H1 (cell line): ENCODE measurements at regions of chr19 and their contacts with region 1.

Region 1: GRCh38 chr19:45643024-45643926 is 4.1 kb upstream of the EML2 start:
- DNase-seq: peak in 1 of 2 experiments; percentile 99
- H3K4me3 ChIP-seq: peak overlapping the region; percentile 34 to 89 (median 70)
- H3K27ac ChIP-seq: no peak overlapping the region
- H3K4me1 ChIP-seq: peaks cover 6 to 30% (median 17%) of the 10 kb centered on the region in 4 experiments
- H3K27me3 ChIP-seq: peaks cover 0 to 6% (median 2%) of the 10 kb centered on the region in 4 experiments; a peak in 4 of 7 replicates
- CTCF ChIP-seq: peak; percentile 97 to 99 (median 98)
- EP300 ChIP-seq: no peak
- POLR2A ChIP-seq: peak in 1 of 2 experiments; percentile 31; a peak in 1 of 3 replicates
- RAD21 ChIP-seq: peak; percentile 96 to 98

Region 2: DNA sequence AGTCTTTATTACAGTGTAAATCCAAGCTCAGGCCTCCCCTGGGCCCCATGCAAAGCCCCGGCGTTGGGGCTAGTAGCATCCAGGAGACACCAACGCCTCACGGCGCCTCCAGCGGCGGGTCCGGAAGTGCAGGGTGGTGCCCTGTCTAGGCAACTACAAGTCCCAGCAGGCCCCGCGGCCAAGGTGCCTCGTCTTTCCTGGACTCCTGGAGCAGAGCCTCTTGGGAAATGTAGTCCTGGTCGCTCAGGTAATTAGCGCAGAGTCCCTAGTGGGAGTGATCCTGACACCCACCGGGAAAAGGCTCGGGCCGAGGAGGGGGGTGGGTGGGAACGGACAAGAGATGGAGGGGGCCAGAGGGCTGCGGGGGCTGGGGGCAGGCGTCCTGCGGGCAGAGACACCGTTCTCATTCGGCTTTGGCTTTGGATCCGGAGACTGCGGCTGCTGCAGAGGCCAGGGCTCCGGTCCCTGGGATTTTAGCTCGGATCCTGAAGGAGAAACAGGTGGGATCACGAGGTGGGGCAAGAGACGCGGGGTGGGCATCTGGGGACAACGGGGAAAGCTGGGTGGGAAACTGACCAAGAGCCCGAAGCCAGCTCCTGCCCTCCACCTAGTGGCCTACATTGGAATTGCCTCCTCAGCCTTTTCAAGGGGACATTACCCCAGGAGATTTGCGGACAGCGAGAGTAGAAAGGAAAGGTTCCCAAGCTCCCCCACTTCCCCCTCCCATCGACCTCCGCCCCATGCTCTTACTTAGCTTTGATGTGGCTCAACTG is 157.8 kb before region 1 on chr19:
- CTCF ChIA-PET with region 1: interaction called, 20 read pairs
- POLR2A ChIA-PET with region 1: no interaction called
- DNase-seq: peak in 1 of 2 experiments; percentile 100
- H3K4me3 ChIP-seq: peak overlapping the region; percentile 32 to 69 (median 52)
- H3K27ac ChIP-seq: no peak overlapping the region; the same call in 1 of the 2 replicates
- H3K4me1 ChIP-seq: peaks cover 0 to 3% (median 0%) of the 10 kb centered on the region in 4 experiments; a peak in 1 of 7 replicates
- H3K27me3 ChIP-seq: no peaks in the 10 kb centered on the region
- CTCF ChIP-seq: peak; percentile 86 to 95 (median 92)
- EP300 ChIP-seq: no peak
- POLR2A ChIP-seq: no peak
- RAD21 ChIP-seq: peak; percentile 59 to 66

Region 3: DNA sequence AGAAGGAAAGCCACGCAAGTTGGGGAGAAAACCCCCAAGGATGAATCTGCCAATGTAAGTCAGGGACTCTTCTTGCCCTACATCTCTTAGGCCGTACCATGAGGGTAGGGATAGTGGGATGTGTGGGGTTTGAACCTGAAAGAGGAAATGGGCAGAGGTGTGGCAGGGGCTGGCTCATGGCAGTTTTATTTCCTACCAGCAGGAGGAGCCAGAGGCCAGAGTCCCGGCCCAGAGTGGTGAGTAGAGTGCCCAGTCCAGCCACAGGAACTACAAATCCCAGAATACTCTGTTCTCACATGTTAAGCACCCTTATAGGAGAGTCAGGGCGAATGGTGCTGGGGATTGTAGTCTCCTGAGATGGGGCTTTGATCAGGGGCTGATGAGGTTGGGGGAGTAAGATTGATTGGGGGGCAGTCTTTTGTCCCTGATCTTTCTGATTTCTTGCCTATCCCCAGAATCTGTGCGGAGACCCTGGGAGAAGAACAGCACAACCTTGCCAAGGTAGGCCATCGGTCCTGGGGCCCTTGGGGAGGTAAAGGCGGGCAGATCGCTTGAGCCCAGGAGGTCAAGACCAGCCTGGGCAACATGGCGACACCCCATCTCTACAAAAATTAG is 119.5 kb before region 1 on chr19:
- CTCF ChIA-PET with region 1: interaction called, 15 read pairs
- POLR2A ChIA-PET with region 1: interaction called, 8 read pairs
- DNase-seq: peak; percentile 64 to 88
- H3K4me3 ChIP-seq: no peak overlapping the region
- H3K27ac ChIP-seq: no peak overlapping the region
- H3K4me1 ChIP-seq: peaks cover 0 to 7% (median 5%) of the 10 kb centered on the region in 4 experiments; a peak in 5 of 7 replicates
- H3K27me3 ChIP-seq: no peaks in the 10 kb centered on the region
- CTCF ChIP-seq: peak; percentile 82 to 93 (median 83)
- EP300 ChIP-seq: no peak
- POLR2A ChIP-seq: no peak
- RAD21 ChIP-seq: peak; percentile 85 to 86

Region 4: GRCh38 chr19:45584332-45585157 is 58.7 kb before region 1 on chr19 and contains the start of gene OPA3:
- CTCF ChIA-PET with region 1: interaction called, 18 read pairs
- POLR2A ChIA-PET with region 1: interaction called, 4 read pairs
- DNase-seq: peak; percentile 94 to 97
- H3K4me3 ChIP-seq: peak within 1 kb of the TSS; percentile 73 to 96 (median 80)
- H3K27ac ChIP-seq: peak within 1 kb of the TSS; percentile 97
- H3K4me1 ChIP-seq: no peaks in the 10 kb centered on the region; a peak in 2 of 7 replicates
- H3K27me3 ChIP-seq: no peaks in the 10 kb centered on the region
- CTCF ChIP-seq: no peak
- EP300 ChIP-seq: no peak
- POLR2A ChIP-seq: peak; percentile 79 to 93
- RAD21 ChIP-seq: no peak
- total RNA-seq, gene OPA3: 12.8 and 14.5 TPM in 2 replicates

Region 5: DNA sequence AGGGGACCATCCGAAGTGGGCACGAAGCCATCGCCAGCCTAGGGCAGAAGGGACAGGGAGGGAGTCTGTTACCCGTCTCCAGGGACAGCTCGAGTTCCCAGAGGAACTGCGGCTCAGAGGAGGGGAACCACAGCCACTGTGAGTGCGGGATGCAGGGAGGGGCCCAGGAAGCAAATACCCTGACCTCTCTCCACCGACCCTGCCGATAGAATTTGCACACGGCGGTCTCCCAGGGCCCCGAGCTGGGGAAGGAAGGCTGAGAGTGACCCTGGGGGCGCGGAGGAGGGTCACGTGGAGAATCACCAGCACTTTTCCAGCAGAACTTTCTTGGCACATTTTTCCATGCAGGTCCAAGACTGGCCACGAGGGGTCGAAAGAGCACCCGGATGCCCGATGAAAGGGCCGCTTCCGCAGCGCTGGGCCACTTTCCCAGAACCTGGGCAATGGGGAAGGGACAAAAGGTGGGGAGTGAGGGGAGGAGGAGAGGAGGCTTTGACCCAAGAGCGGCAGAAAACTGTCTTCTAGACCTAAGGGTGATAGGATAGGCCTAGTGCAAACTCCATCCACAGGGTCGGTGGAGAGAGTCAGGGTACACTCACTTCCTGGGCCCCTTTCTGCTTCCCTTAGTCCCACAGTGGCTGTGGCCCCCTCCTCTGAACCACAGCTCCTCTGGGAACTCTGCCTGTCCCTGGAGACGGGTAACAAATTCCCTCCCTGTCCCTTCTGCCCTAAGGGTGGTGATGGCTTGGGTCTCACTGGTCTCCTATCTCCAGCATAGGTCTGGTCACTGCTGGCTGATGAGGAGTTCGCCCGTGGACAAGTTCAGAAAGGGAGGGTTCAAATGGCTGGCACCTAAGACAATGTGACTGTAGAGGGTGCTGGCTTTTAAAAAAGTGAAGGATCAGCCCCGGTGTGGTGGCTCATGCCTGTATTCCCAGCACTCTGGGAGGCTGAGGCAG is 35.9 kb before region 1 on chr19:
- CTCF ChIA-PET with region 1: interaction called, 135 read pairs
- POLR2A ChIA-PET with region 1: interaction called, 8 read pairs
- DNase-seq: peak; percentile 67 to 97
- H3K4me3 ChIP-seq: peak overlapping the region; percentile 34 to 57 (median 42); a peak in 6 of 8 replicates
- H3K27ac ChIP-seq: no peak overlapping the region
- H3K4me1 ChIP-seq: peaks cover 0 to 5% (median 2%) of the 10 kb centered on the region in 4 experiments; a peak in 5 of 7 replicates
- H3K27me3 ChIP-seq: peaks cover 0 to 9% (median 7%) of the 10 kb centered on the region in 4 experiments; a peak in 4 of 7 replicates
- CTCF ChIP-seq: peak; percentile 77 to 84 (median 83)
- EP300 ChIP-seq: no peak
- POLR2A ChIP-seq: peak in 1 of 2 experiments; percentile 63; a peak in 2 of 3 replicates
- RAD21 ChIP-seq: peak; percentile 67 to 77

Region 6: GRCh38 chr19:45653634-45654033 is 10.4 kb after region 1 on chr19:
- CTCF ChIA-PET with region 1: interaction called, 30 read pairs
- POLR2A ChIA-PET with region 1: interaction called, 4 read pairs
- DNase-seq: no peak
- H3K4me3 ChIP-seq: no peak overlapping the region
- H3K27ac ChIP-seq: no peak overlapping the region
- H3K4me1 ChIP-seq: peaks cover 0 to 4% (median 1%) of the 10 kb centered on the region in 4 experiments; a peak in 3 of 7 replicates
- H3K27me3 ChIP-seq: no peaks in the 10 kb centered on the region
- CTCF ChIP-seq: no peak
- EP300 ChIP-seq: no peak
- POLR2A ChIP-seq: no peak
- RAD21 ChIP-seq: no peak

Region 7: GRCh38 chr19:46009530-46010510 is 366.5 kb after region 1 on chr19:
- CTCF ChIA-PET with region 1: no interaction called
- POLR2A ChIA-PET with region 1: no interaction called
- DNase-seq: peak in 1 of 2 experiments; percentile 95
- H3K4me3 ChIP-seq: no peak overlapping the region
- H3K27ac ChIP-seq: no peak overlapping the region
- H3K4me1 ChIP-seq: peaks cover 0 to 6% (median 5%) of the 10 kb centered on the region in 4 experiments; a peak in 5 of 7 replicates
- H3K27me3 ChIP-seq: peaks cover 0 to 7% (median 6%) of the 10 kb centered on the region in 4 experiments; a peak in 4 of 7 replicates
- CTCF ChIP-seq: peak; percentile 75 to 84 (median 82)
- EP300 ChIP-seq: no peak
- POLR2A ChIP-seq: no peak
- RAD21 ChIP-seq: peak; percentile 61 to 72